Gastrocnemius medialis (tissue), 4 donors: ENCODE measurements at regions of chr6 and their contacts with region 1.

Region 1: GRCh38 chr6:7107578-7108195 is at the start of gene RREB1:
- DNase-seq: peak; percentile 64 to 71
- ATAC-seq: peak; percentile 82 to 85
- H3K4me3 ChIP-seq: peak within 1 kb of the TSS; percentile 93 to 98 (median 96)
- H3K27ac ChIP-seq: peak within 1 kb of the TSS; percentile 85 to 96 (median 94)
- H3K4me1 ChIP-seq: peaks cover 17 to 22% of the 10 kb centered on the region in 2 donors
- H3K27me3 ChIP-seq: no peaks in the 10 kb centered on the region
- CTCF ChIP-seq: no peak
- POLR2A ChIP-seq: peak; percentile 85 to 91
- total RNA-seq, gene RREB1: 18.0 to 41.3 (median 39.2) TPM

Region 2: DNA sequence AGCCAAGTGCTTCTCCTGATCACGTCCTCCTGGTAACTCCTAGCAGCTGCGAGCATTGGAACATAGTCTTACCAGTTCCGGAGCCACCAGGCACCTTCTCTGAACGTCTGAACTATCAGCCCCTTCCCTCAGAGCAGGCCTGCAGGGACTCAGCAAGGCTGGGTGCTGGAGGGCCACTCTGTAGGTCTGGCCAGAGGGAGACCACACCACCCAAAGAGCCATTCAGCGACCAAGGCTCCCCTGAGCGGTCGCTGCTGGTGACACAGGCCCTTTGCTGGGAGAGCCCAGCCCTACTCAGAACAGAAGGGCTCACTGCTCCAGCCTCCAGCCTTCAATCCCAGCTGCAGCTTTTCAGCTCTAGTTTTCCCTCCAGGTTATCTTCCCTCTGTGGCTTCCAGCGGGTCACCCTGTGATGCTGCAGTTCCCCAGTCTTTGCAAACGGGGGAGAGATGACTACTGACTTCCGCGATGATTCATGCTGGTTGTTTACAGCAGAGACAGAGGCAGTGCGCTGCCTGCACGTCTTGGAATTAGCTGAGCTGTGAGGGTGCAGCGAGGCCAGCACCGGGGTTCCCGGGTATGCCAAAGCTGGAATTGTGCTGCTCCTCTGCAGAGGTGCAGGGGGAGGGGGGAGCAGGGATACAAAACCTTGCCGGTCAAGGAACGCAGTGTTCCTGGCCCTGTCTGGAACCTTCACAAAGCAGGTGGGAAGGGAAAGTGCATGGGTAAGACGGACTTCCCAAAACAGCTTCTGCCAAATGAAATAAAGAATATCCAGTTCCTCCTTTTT is 357.8 kb before region 1 on chr6:
- in situ Hi-C with region 1: no loop called
- intact Hi-C with region 1: loop called (anchors 5 kb)
- DNase-seq: peak; percentile 88 to 95
- ATAC-seq: peak; percentile 63 to 78
- H3K4me3 ChIP-seq: peak overlapping the region; percentile 38 to 70 (median 56)
- H3K27ac ChIP-seq: peak overlapping the region; percentile 98 to 99 (median 98)
- H3K4me1 ChIP-seq: peaks cover 45 to 47% of the 10 kb centered on the region in 2 donors
- H3K27me3 ChIP-seq: no peaks in the 10 kb centered on the region
- CTCF ChIP-seq: no peak
- POLR2A ChIP-seq: peak; percentile 56 to 88

Region 3: GRCh38 chr6:7058250-7058923 is 49.3 kb before region 1 on chr6:
- in situ Hi-C with region 1: no loop called
- intact Hi-C with region 1: loop called (anchors 2 kb)
- DNase-seq: peak; percentile 89 to 92
- ATAC-seq: peak; percentile 98
- H3K4me3 ChIP-seq: peak overlapping the region in 3 of 4 donors; percentile 19 to 28 (median 23)
- H3K27ac ChIP-seq: peak overlapping the region; percentile 91 to 97 (median 94)
- H3K4me1 ChIP-seq: peaks cover 12 to 16% of the 10 kb centered on the region in 2 donors
- H3K27me3 ChIP-seq: no peaks in the 10 kb centered on the region
- CTCF ChIP-seq: no peak
- POLR2A ChIP-seq: peak; percentile 63 to 67

Region 4: GRCh38 chr6:7166410-7167305 is 59.0 kb after region 1 on chr6:
- in situ Hi-C with region 1: no loop called
- intact Hi-C with region 1: loop called (anchors 5 kb)
- DNase-seq: no peak
- ATAC-seq: peak in 1 of 2 donors; percentile 12
- H3K4me3 ChIP-seq: no peak overlapping the region
- H3K27ac ChIP-seq: peak overlapping the region; percentile 69 to 80 (median 76)
- H3K4me1 ChIP-seq: peaks cover 81 to 87% of the 10 kb centered on the region in 2 donors
- H3K27me3 ChIP-seq: no peaks in the 10 kb centered on the region
- CTCF ChIP-seq: no peak
- POLR2A ChIP-seq: no peak

Region 5: GRCh38 chr6:7201688-7202541 is 94.2 kb after region 1 on chr6:
- in situ Hi-C with region 1: loop called in 1 of 4 experiments (anchors 25 kb)
- intact Hi-C with region 1: no loop called
- DNase-seq: peak in 1 of 2 donors; percentile 48
- ATAC-seq: peak in 1 of 2 donors; percentile 48
- H3K4me3 ChIP-seq: no peak overlapping the region
- H3K27ac ChIP-seq: no peak overlapping the region
- H3K4me1 ChIP-seq: peaks cover 11 to 13% of the 10 kb centered on the region in 2 donors
- H3K27me3 ChIP-seq: no peaks in the 10 kb centered on the region
- CTCF ChIP-seq: no peak
- POLR2A ChIP-seq: no peak